AG04449 (cell line): ENCODE measurements at regions of chr1 and their contacts with region 1.

Region 1: DNA sequence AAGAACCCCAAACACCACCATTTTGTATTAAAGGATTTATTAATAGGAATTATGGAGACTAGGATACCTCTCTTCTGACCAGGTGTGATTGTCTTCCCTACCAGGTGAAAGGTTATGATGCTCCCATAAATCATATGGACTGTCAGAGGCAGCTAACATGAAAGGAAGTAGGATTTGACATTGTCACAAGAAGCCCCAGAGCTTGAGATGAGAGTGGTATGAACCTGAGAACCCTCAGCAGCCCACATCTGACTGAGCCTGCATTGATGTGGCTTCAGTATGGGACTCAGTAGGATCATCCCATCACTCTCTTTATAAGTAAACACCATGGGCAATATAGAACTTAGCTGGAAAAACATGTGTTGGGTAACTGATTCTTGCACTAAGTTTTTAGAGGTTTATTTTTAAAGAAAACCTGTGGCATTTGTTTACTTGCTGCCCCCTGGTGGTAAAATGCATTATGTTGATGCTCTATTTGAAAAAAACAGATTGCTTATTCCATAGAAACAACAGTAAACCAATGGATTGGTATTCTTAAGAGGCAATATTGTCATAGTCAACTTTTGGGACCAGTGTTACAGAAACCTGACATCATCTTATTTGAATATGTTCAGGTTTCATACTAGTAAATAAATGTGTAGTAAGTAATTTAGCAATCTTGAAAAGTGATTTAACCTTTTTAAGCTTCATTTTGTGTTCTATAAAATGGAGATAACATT is 16.6 kb upstream of the CACYBP start:
- DNase-seq: no peak
- H3K4me3 ChIP-seq: no peak overlapping the region
- CTCF ChIP-seq: peak; percentile 12

Region 2: GRCh38 chr1:174769961-174770549 is 213.1 kb before region 1 on chr1:
- CTCF ChIA-PET with region 1: interaction called, 85 read pairs
- POLR2A ChIA-PET with region 1: no interaction called
- DNase-seq: no peak
- H3K4me3 ChIP-seq: no peak overlapping the region
- CTCF ChIP-seq: peak; percentile 61

Region 3: DNA sequence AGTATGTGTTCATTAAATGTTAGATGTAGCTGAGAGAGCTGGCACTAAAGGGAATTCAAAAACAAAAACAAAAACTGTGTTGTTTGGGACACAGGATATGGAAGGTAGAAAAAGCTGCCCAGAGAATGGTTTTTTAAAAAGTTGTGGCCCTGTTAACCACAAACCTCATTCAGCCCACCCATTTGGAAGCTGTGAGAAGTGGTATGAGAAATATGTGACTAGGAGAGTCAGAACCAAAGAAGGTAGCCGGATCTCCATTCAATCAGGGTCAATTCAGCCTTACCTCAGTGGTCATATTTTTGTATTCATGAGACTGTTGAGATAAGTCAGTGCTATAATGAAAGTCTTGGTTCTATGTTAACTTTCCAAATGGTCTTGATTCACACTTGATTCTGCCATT is 13.2 kb before region 1 on chr1:
- CTCF ChIA-PET with region 1: interaction called, 14 read pairs
- POLR2A ChIA-PET with region 1: no interaction called
- DNase-seq: no peak
- H3K4me3 ChIP-seq: no peak overlapping the region
- CTCF ChIP-seq: no peak

Region 4: DNA sequence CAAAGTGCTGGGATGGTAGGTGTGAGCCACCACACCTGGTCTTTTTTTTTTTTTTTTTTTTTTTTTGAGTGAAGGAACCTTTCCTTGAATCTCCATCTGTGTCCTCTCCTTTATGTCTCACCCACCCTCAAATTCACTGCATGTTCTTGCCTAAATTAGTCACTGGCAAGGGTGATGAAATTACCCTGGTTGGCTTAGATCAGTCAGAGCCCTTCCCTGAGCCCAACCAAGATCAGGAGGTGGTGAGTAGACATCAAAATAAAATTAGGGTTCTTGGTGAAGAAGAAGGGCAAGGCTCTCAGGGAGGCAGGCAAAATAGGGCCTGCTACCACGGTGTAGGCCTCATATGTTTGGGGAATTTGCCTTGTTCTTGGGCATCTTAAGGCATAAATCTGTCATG is 79.2 kb after region 1 on chr1:
- CTCF ChIA-PET with region 1: no interaction called
- POLR2A ChIA-PET with region 1: no interaction called
- DNase-seq: no peak
- H3K4me3 ChIP-seq: no peak overlapping the region
- CTCF ChIP-seq: no peak

Region 5: GRCh38 chr1:175250027-175250426 is 266.9 kb after region 1 on chr1:
- CTCF ChIA-PET with region 1: no interaction called
- POLR2A ChIA-PET with region 1: no interaction called
- DNase-seq: no peak
- H3K4me3 ChIP-seq: no peak overlapping the region
- CTCF ChIP-seq: no peak